Activated naive CD4-positive, alpha-beta T cell treated with anti-CD3 and anti-CD28 coated beads for 36 hours (primary cell): ENCODE measurements at regions of chrX and their contacts with region 1.

Region 1: GRCh38 chrX:16695079-16695676 is 17.3 kb downstream of the CTPS2 start:
- DNase-seq: peak; percentile 74
- H3K4me3 Mint-ChIP-seq: no peak overlapping the region
- H3K27ac Mint-ChIP-seq: no peak overlapping the region
- H3K4me1 Mint-ChIP-seq: no peaks in the 10 kb centered on the region
- H3K27me3 Mint-ChIP-seq: no peaks in the 10 kb centered on the region

Region 2: DNA sequence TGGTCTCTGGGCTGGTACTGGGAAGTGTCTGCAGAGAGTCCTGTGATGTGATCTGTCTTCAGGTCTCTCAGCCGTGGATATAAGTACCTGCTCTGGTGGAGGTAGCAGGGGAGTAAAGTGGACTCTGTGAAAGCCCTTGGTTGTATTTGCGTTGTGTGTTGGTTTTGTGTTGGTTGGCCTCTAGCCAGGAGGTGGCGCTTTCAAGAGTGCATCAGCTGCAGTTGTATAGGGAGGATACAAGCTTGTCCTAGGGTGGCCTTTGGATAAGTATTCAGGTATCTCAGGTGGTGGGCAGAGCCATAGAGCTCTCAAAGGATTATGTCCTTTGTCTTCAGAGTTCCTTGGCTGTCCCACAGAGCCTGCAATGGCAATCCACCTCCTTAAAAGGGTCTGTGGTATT is 416.3 kb before region 1 on chrX:
- CTCF ChIA-PET with region 1: interaction called, 3 read pairs
- intact Hi-C with region 1: loop called (anchors 10 kb)
- DNase-seq: peak; percentile 10
- H3K4me3 Mint-ChIP-seq: no peak overlapping the region
- H3K27ac Mint-ChIP-seq: no peak overlapping the region
- H3K4me1 Mint-ChIP-seq: no peaks in the 10 kb centered on the region
- H3K27me3 Mint-ChIP-seq: peaks cover 6% of the 10 kb centered on the region

Region 3: DNA sequence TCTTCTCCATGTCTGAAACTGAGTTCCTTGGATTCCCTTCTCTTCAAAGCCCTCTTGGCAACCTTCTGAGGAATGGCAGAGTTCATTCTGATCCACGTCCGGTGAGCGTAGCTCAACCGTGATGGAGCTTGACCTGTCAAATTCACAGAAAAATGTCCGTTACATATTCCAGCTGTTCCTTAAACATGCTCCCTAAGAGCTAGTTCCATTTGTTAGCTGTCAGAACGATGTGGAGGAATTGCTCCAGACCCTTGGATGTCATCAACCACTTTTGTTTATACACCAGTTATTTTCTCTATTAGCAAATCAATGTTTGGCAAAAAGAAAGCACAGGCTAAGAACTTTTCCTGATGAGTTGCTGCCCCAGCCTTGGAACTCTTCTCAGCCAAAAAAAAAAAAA is 730.0 kb after region 1 on chrX:
- CTCF ChIA-PET with region 1: no interaction called
- intact Hi-C with region 1: no loop called
- DNase-seq: no peak
- H3K4me3 Mint-ChIP-seq: no peak overlapping the region
- H3K27ac Mint-ChIP-seq: no peak overlapping the region
- H3K4me1 Mint-ChIP-seq: no peaks in the 10 kb centered on the region
- H3K27me3 Mint-ChIP-seq: peaks cover 6% of the 10 kb centered on the region